ENCODE measurements at regions of chr2 and their contacts with region 1.

Region 1: GRCh38 chr2:74502720-74503505 is 3.5 kb upstream of the LBX2 start:
- DNase-seq: peak; percentile 58
- H3K4me3 ChIP-seq: peak overlapping the region; percentile 62
- H3K27ac ChIP-seq: peak overlapping the region; percentile 90
- H3K27me3 ChIP-seq: peaks cover 34% of the 10 kb centered on the region
- CTCF ChIP-seq: peak; percentile 40

Region 2: GRCh38 chr2:74529357-74530238 is 26.7 kb after region 1 on chr2 and contains the starts of genes AUP1 and HTRA2:
- CTCF ChIA-PET with region 1: no interaction called
- POLR2A ChIA-PET with region 1: interaction called, 12 read pairs
- DNase-seq: peak; percentile 98
- H3K4me3 ChIP-seq: peak within 1 kb of the TSS; percentile 100
- H3K27ac ChIP-seq: peak within 1 kb of the TSS; percentile 77
- H3K27me3 ChIP-seq: no peaks in the 10 kb centered on the region
- CTCF ChIP-seq: no peak
- polyA plus RNA-seq, gene AUP1: 51.9 and 64.4 TPM in 2 replicates
- polyA plus RNA-seq, gene HTRA2: 20.2 and 22.4 TPM in 2 replicates

Measured in AG04450 (cell line).